Mammary epithelial cell (primary cell): ENCODE measurements at regions of chr20 and their contacts with region 1.

Region 1: GRCh38 chr20:1657556-1658334 is at the start of gene SIRPG:
- DNase-seq: no peak
- H3K4me3 ChIP-seq: no peak within 1 kb of the TSS
- H3K27ac ChIP-seq: no peak within 1 kb of the TSS
- H3K4me1 ChIP-seq: peaks cover 7% of the 10 kb centered on the region
- H3K27me3 ChIP-seq: no peaks in the 10 kb centered on the region
- CTCF ChIP-seq: no peak
- total RNA-seq, gene SIRPG: not detected

Region 2: GRCh38 chr20:1437235-1437904 is 220.4 kb before region 1 on chr20:
- CTCF ChIA-PET with region 1: no interaction called
- dilution Hi-C with region 1: no loop called
- in situ Hi-C with region 1: no loop called
- intact Hi-C with region 1: no loop called
- DNase-seq: peak; percentile 57
- H3K4me3 ChIP-seq: no peak overlapping the region
- H3K27ac ChIP-seq: no peak overlapping the region
- H3K4me1 ChIP-seq: peaks cover 13% of the 10 kb centered on the region
- H3K27me3 ChIP-seq: no peaks in the 10 kb centered on the region
- CTCF ChIP-seq: peak; percentile 85 to 93

Region 3: GRCh38 chr20:1600736-1601135 is 57.0 kb before region 1 on chr20:
- CTCF ChIA-PET with region 1: no interaction called
- dilution Hi-C with region 1: no loop called
- in situ Hi-C with region 1: no loop called
- intact Hi-C with region 1: no loop called
- DNase-seq: peak; percentile 56
- H3K4me3 ChIP-seq: no peak overlapping the region
- H3K27ac ChIP-seq: no peak overlapping the region
- H3K4me1 ChIP-seq: no peaks in the 10 kb centered on the region
- H3K27me3 ChIP-seq: no peaks in the 10 kb centered on the region
- CTCF ChIP-seq: no peak

Region 4: DNA sequence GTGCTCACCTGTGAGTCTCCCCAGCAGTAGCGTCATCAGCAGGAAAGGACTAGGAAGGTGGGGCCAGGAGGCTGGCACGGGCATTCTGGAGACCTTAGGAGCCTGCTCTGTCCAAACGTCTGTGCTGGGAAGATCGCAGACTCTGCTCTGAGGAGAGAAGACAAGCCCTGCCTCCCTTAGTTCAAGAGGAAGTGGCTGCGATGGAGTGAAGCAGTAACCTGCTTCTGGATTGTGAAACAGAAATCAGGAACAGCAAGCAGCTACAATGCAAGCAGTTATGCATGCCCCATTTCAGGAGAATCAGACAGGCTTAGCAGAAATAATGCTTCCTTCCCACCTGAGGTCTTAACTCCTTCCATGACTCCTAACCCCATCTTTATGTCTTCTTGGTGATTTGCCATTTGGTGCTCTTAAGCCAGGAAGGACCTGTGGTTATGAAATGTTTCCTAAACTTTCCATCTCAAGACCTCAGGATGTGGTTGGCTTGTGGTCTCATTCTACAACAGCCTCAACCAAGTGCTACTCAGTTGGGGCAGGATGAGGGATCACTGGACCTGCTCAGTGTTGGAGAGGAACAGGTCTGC is 37.8 kb before region 1 on chr20 and contains the start of gene SIRPB1:
- CTCF ChIA-PET with region 1: no interaction called
- dilution Hi-C with region 1: no loop called
- in situ Hi-C with region 1: no loop called
- intact Hi-C with region 1: no loop called
- DNase-seq: no peak
- H3K4me3 ChIP-seq: no peak within 1 kb of the TSS
- H3K27ac ChIP-seq: no peak within 1 kb of the TSS
- H3K4me1 ChIP-seq: peaks cover 15% of the 10 kb centered on the region
- H3K27me3 ChIP-seq: no peaks in the 10 kb centered on the region
- CTCF ChIP-seq: no peak
- total RNA-seq, gene SIRPB1: 3.8 to 5.3 TPM

Region 5: DNA sequence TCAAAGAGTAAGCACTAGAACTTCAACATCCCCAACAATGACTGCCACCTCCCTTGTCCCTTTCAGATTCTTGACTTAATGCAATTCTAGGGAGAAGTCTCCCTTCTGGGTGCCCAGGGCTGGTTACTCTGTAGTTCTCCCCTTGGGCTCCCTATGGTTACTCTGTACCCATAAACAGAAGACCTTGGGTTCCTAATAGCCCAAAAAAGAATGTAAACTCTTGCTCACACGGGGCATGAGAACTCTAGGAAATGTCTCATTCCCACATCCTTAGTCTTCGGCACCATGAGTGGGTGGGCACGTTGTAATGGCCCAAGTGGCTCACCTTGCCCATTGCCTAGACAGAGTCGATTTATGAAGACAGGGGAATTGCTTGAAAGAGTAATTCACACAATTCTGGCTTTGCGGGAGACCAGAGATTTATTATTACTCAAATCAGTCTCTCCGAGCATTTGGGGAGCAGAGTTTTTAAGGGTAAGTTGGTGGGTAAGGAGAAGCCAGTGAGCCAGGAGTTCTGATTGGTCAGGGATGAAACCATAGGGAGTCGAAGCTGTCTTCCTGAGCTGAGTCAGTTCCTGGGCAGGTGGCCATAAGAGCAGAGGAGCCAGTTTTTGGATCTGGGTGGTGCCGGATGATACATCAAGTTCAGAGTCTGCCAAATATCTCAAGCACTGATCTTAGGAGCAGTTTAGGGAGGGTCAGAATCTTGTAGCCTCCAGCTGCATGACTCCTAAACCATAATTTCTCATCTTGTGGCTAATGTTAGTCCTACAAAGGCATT is 61.0 kb after region 1 on chr20:
- CTCF ChIA-PET with region 1: no interaction called
- dilution Hi-C with region 1: no loop called
- in situ Hi-C with region 1: no loop called
- intact Hi-C with region 1: loop called (anchors 5 kb)
- DNase-seq: peak; percentile 99
- H3K4me3 ChIP-seq: no peak overlapping the region
- H3K27ac ChIP-seq: peak overlapping the region; percentile 85
- H3K4me1 ChIP-seq: peaks cover 43% of the 10 kb centered on the region
- H3K27me3 ChIP-seq: no peaks in the 10 kb centered on the region
- CTCF ChIP-seq: no peak